Naive thymus-derived CD4-positive, alpha-beta T cell (primary cell): ENCODE measurements at regions of chr22 and their contacts with region 1.

Region 1: DNA sequence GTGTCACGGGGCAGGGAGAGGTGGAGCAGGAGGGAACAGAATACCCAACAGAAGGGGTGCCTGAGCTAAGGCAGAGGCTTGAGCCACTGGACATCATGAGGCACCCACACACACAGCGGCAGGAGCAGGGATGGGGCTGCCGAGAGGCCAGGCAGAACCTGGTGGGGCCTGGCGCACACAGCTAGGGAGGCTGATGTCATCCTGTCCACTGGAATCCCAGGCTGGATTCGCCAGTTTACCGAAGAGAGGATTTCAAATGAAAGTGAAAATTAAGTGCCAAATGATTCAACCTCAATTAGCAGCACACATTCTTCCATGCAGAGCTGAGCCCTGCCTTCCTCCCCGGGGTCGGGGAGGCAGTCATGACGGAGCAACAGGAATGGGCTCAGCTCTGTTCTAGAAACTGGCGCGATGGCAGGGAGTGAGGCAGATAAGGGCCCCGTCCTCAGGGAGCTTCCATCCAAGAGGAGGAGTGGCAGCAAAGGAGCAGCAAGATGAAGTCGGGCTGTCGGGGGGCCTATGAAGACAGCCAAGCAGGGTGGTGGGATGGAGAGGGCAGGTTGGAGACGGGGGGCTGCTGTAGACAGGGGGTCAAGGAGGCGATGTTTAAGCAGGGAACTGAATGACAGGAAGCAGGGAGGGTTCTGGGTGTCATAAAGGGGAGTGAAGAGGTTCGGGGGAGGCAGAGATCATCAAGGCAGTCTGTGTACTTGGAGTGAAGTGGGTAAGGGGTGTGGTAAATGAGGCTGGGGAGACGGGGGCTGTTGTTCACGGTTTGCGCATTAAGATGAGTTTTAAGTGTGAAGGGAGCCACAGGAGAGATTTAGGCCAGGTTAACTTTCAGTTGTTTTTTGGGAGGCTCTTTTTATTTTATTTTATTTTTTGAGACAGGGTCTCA is 6.4 kb downstream of the RAC2 start:
- DNase-seq: peak in 6 of 9 donors; percentile 21 to 63 (median 46)
- ATAC-seq: no peak
- H3K4me3 ChIP-seq: peak overlapping the region; percentile 49
- H3K4me3 Mint-ChIP-seq: peak overlapping the region; percentile 85 to 99 (median 92)
- H3K27ac ChIP-seq: peak overlapping the region; percentile 86
- H3K27ac Mint-ChIP-seq: peak overlapping the region; percentile 93 to 100 (median 98)
- H3K4me1 ChIP-seq: peaks cover 87 to 90% of the 10 kb centered on the region in 2 donors
- H3K4me1 Mint-ChIP-seq: peaks cover 80 to 100% (median 95%) of the 10 kb centered on the region in 7 donors
- H3K27me3 ChIP-seq: no peaks in the 10 kb centered on the region
- H3K27me3 Mint-ChIP-seq: no peaks in the 10 kb centered on the region

Region 2: GRCh38 chr22:37210041-37210803 is 27.4 kb before region 1 on chr22:
- CTCF ChIA-PET with region 1: interaction called, 37 read pairs
- POLR2A ChIA-PET with region 1: interaction called, 335 read pairs
- intact Hi-C with region 1: loop called in 1 of 2 experiments (anchors 1 kb)
- DNase-seq: no peak
- ATAC-seq: no peak
- H3K4me3 ChIP-seq: no peak overlapping the region
- H3K4me3 Mint-ChIP-seq: no peak overlapping the region
- H3K27ac ChIP-seq: peak overlapping the region; percentile 11
- H3K27ac Mint-ChIP-seq: peak overlapping the region; percentile 19 to 94 (median 80)
- H3K4me1 ChIP-seq: peaks cover 0 to 24% of the 10 kb centered on the region in 2 donors
- H3K4me1 Mint-ChIP-seq: peaks cover 22 to 85% (median 75%) of the 10 kb centered on the region in 7 donors
- H3K27me3 ChIP-seq: no peaks in the 10 kb centered on the region
- H3K27me3 Mint-ChIP-seq: no peaks in the 10 kb centered on the region

Region 3: GRCh38 chr22:37218771-37219411 is 18.7 kb before region 1 on chr22:
- CTCF ChIA-PET with region 1: interaction called, 37 read pairs
- POLR2A ChIA-PET with region 1: interaction called, 335 read pairs
- intact Hi-C with region 1: loop called (anchors 1 kb)
- DNase-seq: peak in 8 of 9 donors; percentile 59 to 97 (median 94)
- ATAC-seq: peak; percentile 89
- H3K4me3 ChIP-seq: peak overlapping the region; percentile 55
- H3K4me3 Mint-ChIP-seq: peak overlapping the region; percentile 74 to 92 (median 83)
- H3K27ac ChIP-seq: peak overlapping the region; percentile 77
- H3K27ac Mint-ChIP-seq: peak overlapping the region; percentile 79 to 99 (median 91)
- H3K4me1 ChIP-seq: peaks cover 61 to 76% of the 10 kb centered on the region in 2 donors
- H3K4me1 Mint-ChIP-seq: peaks cover 62 to 99% (median 92%) of the 10 kb centered on the region in 7 donors
- H3K27me3 ChIP-seq: no peaks in the 10 kb centered on the region
- H3K27me3 Mint-ChIP-seq: no peaks in the 10 kb centered on the region

Region 4: GRCh38 chr22:37249986-37250385 is 12.4 kb after region 1 on chr22:
- CTCF ChIA-PET with region 1: interaction called, 3 read pairs
- POLR2A ChIA-PET with region 1: interaction called, 297 read pairs
- intact Hi-C with region 1: no loop called
- DNase-seq: no peak
- ATAC-seq: no peak
- H3K4me3 ChIP-seq: no peak overlapping the region
- H3K4me3 Mint-ChIP-seq: no peak overlapping the region
- H3K27ac ChIP-seq: no peak overlapping the region
- H3K27ac Mint-ChIP-seq: peak overlapping the region in 1 of 9 donors; percentile 32
- H3K4me1 ChIP-seq: peaks cover 4 to 6% of the 10 kb centered on the region in 2 donors
- H3K4me1 Mint-ChIP-seq: peaks cover 4 to 15% (median 13%) of the 10 kb centered on the region in 7 donors
- H3K27me3 ChIP-seq: no peaks in the 10 kb centered on the region
- H3K27me3 Mint-ChIP-seq: peaks cover 0 to 6% (median 0%) of the 10 kb centered on the region in 5 donors

Region 5: DNA sequence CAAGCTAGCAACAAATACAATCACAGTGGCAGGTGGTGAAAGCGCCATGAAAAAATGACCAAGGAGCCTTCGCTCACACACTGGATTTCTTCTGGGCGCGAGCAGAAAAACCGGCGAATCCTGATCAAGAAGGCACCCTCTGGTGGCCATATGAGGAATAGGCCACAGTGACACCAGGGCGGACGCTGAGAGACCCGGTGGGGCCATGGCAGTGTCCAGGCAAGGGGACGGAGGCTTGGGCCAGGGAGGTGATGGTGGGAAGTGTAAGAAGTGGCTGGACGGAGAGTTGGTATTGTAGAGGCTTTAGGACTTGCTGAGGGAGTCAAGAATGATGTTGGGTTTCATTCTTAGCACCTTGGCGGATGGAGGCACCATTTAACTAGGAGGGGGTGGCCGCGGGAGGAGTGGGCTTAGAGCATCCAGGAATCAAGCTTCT is 23.3 kb after region 1 on chr22:
- CTCF ChIA-PET with region 1: interaction called, 184 read pairs
- POLR2A ChIA-PET with region 1: interaction called, 151 read pairs
- intact Hi-C with region 1: loop called (anchors 1 to 5 kb)
- DNase-seq: peak; percentile 46 to 71 (median 64)
- ATAC-seq: peak; percentile 91
- H3K4me3 ChIP-seq: no peak overlapping the region
- H3K4me3 Mint-ChIP-seq: peak overlapping the region in 6 of 10 donors; percentile 1 to 33 (median 15)
- H3K27ac ChIP-seq: no peak overlapping the region
- H3K27ac Mint-ChIP-seq: peak overlapping the region in 8 of 9 donors; percentile 7 to 86 (median 56)
- H3K4me1 ChIP-seq: peaks cover 7 to 24% of the 10 kb centered on the region in 2 donors
- H3K4me1 Mint-ChIP-seq: peaks cover 23 to 32% (median 27%) of the 10 kb centered on the region in 7 donors
- H3K27me3 ChIP-seq: no peaks in the 10 kb centered on the region
- H3K27me3 Mint-ChIP-seq: peaks cover 0 to 13% (median 0%) of the 10 kb centered on the region in 5 donors